PC-9 (cell line): ENCODE measurements at regions of chr10 and their contacts with region 1.

Region 1: GRCh38 chr10:3162533-3162932 is 10.0 kb downstream of the PITRM1 start:
- DNase-seq: no peak
- H3K4me3 ChIP-seq: no peak overlapping the region
- H3K27ac ChIP-seq: no peak overlapping the region
- H3K4me1 ChIP-seq: no peaks in the 10 kb centered on the region
- H3K27me3 ChIP-seq: no peaks in the 10 kb centered on the region
- CTCF ChIP-seq: 0 out of 2 replicates have a peak, but pooled peaks have one; percentile 27

Region 2: GRCh38 chr10:2619916-2620315 is 542.6 kb before region 1 on chr10:
- CTCF ChIA-PET with region 1: no interaction called
- POLR2A ChIA-PET with region 1: no interaction called
- intact Hi-C with region 1: no loop called
- DNase-seq: no peak
- H3K4me3 ChIP-seq: no peak overlapping the region
- H3K27ac ChIP-seq: no peak overlapping the region
- H3K4me1 ChIP-seq: no peaks in the 10 kb centered on the region
- H3K27me3 ChIP-seq: peaks cover 8% of the 10 kb centered on the region; the same call in 1 of the 2 replicates
- CTCF ChIP-seq: no peak

Region 3: DNA sequence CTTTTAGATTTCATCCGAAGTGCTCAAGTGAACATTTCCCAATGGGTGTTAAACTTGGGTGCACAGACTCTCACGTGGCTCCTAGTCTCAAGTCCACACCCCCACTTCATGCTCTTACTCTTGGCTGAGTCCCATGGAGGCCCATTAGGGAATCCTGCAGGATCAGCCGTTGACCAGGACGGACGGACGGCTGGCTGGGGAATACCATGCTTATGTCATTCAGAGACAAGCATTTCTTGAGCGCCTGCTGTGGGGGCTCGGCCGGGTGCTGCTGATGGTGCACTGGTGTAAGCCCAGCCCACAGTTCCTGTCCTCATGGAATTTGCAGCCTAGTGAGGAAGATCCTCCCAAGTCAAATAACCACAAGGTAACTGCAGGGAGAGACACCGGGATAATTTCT is 34.6 kb before region 1 on chr10:
- CTCF ChIA-PET with region 1: interaction called, 12 read pairs
- POLR2A ChIA-PET with region 1: no interaction called
- intact Hi-C with region 1: no loop called
- DNase-seq: no peak
- H3K4me3 ChIP-seq: no peak overlapping the region
- H3K27ac ChIP-seq: no peak overlapping the region
- H3K4me1 ChIP-seq: peaks cover 8% of the 10 kb centered on the region
- H3K27me3 ChIP-seq: no peaks in the 10 kb centered on the region
- CTCF ChIP-seq: no peak

Region 4: GRCh38 chr10:3139135-3139910 is 23.2 kb before region 1 on chr10:
- CTCF ChIA-PET with region 1: no interaction called
- POLR2A ChIA-PET with region 1: interaction called, 30 read pairs
- intact Hi-C with region 1: no loop called
- DNase-seq: no peak
- H3K4me3 ChIP-seq: no peak overlapping the region
- H3K27ac ChIP-seq: no peak overlapping the region
- H3K4me1 ChIP-seq: no peaks in the 10 kb centered on the region
- H3K27me3 ChIP-seq: no peaks in the 10 kb centered on the region
- CTCF ChIP-seq: no peak